Esophagus muscularis mucosa (tissue), 4 donors: ENCODE measurements at regions of chrX and their contacts with region 1.

Region 1: DNA sequence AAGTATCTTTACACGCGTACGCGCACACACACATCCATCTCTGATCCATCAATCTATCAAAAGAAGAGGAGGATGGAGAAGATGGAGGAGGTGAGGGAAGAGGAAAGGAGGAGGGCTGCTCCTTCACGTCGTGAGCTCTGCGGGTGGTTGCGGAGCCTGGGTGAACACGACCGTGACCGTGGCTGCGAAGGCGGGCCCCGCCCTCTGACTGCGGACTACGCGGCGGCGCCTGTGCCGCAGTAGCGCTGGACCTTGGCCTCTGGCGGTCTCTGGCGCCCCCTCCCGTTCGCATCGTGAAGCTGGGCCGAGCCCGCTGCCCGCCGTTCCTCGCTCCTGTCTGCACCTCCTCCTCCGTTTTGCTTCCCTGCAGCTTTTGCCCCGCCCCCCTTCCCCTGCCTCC is 37.7 kb upstream of the ARAF start:
- DNase-seq: peak; percentile 92
- H3K4me3 ChIP-seq: peak overlapping the region; percentile 57 to 67 (median 59)
- H3K27ac ChIP-seq: peak overlapping the region in 1 of 4 donors; percentile 48
- H3K4me1 ChIP-seq: peaks cover 0 to 7% (median 6%) of the 10 kb centered on the region in 4 donors
- H3K27me3 ChIP-seq: no peaks in the 10 kb centered on the region
- CTCF ChIP-seq: peak; percentile 68 to 82 (median 69)
- EP300 ChIP-seq: no peak
- POLR2A ChIP-seq: no peak

Region 2: DNA sequence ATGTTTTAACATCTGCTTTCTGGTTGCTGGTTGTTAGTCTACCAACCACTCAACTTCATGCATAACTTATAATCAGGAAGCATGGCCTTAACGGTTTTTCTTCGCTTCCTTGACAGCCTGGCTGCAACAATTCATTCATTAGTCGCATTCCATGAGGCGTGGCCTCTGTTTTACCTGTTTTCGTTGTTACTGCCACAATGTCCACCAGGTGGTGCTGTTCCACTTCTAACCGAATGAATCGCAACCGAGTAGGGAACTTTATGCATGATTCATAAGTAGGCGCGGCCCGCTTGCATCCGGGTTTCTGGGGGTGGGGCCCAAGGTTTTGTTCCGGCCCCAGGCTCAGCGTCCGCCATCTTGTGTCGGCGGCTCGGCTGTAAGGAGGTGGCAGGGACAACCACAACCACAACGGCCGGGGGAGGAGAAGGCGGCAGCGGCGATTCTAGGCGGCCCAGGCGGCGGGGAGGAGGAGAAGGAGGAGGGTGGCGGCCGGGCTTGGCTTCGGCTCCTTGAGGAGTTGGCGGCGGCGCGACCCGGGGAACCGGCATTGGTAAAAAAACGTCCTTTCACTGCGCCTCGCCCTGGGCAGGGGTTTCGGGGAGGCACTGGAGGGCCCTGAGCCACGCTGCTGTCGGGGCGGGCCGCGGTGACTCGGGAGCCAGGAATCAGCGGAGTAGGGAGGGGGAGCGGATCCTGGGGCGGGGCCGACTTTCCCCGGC is 329.7 kb before region 1 on chrX and contains the start of gene UBA1:
- intact Hi-C with region 1: loop called (anchors 2 kb)
- DNase-seq: peak; percentile 97
- H3K4me3 ChIP-seq: peak within 1 kb of the TSS; percentile 72 to 95 (median 80)
- H3K27ac ChIP-seq: peak within 1 kb of the TSS; percentile 92 to 97 (median 96)
- H3K4me1 ChIP-seq: peaks cover 50 to 71% (median 57%) of the 10 kb centered on the region in 4 donors
- H3K27me3 ChIP-seq: no peaks in the 10 kb centered on the region
- CTCF ChIP-seq: peak; percentile 59 to 95 (median 93)
- EP300 ChIP-seq: no peak
- POLR2A ChIP-seq: peak; percentile 45
- total RNA-seq, gene UBA1: 125 to 218 (median 147) TPM

Region 3: GRCh38 chrX:47384502-47384901 is 138.8 kb before region 1 on chrX:
- intact Hi-C with region 1: loop called (anchors 10 kb)
- DNase-seq: no peak
- H3K4me3 ChIP-seq: no peak overlapping the region
- H3K27ac ChIP-seq: no peak overlapping the region
- H3K4me1 ChIP-seq: no peaks in the 10 kb centered on the region
- H3K27me3 ChIP-seq: no peaks in the 10 kb centered on the region
- CTCF ChIP-seq: peak; percentile 64 to 77 (median 65)
- EP300 ChIP-seq: no peak
- POLR2A ChIP-seq: no peak

Region 4: DNA sequence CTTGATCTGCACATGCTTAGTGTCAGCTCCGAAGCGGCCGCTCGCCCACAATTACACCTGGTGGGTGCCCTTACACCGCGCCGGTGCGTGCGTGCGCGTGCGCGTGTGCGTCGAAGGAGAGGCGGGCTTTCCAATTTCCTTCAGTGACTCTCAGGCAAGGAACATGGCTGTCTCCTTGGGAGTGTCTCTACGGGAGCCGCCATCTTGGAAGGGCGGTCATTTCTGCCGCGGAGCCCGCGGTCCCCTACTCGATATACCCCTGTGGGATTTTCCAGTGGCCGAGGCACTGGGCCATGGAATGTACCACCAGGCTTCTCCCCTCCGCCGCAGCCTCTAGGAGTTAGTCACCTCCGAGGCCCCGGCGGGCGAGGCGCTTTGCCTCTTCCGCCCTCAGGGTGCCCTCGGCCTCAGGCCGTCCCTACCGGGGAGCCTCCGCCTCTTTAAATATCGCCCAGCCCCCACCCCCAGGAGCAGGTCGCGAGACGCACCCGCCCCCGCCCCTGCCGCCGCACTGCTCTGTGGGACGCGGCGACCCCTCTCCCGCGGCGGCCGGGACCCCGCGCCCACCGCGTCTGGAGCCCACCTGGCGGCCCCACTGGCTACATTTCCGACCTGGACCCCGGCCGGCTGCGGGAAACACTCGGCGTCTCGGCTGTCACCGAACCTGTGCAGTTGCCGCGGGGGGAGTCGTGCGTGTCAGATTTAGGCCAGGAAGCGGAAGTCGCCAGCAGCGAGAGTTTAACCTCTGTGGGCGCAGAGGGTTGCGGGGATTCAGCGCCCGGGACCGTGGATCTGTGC is 40.6 kb before region 1 on chrX and contains the start of gene ZNF41:
- intact Hi-C with region 1: loop called (anchors 5 kb)
- DNase-seq: peak; percentile 92
- H3K4me3 ChIP-seq: peak within 1 kb of the TSS; percentile 71 to 88 (median 80)
- H3K27ac ChIP-seq: peak within 1 kb of the TSS; percentile 92 to 98 (median 95)
- H3K4me1 ChIP-seq: peaks cover 0 to 29% (median 15%) of the 10 kb centered on the region in 4 donors
- H3K27me3 ChIP-seq: no peaks in the 10 kb centered on the region
- CTCF ChIP-seq: no peak
- EP300 ChIP-seq: no peak
- POLR2A ChIP-seq: peak; percentile 25
- total RNA-seq, gene ZNF41: 7.5 to 9.0 (median 7.6) TPM

Region 5: GRCh38 chrX:48574270-48575266 is 1051.3 kb after region 1 on chrX and contains the start of gene RBM3:
- intact Hi-C with region 1: no loop called
- DNase-seq: peak; percentile 98
- H3K4me3 ChIP-seq: peak within 1 kb of the TSS; percentile 73 to 79 (median 76)
- H3K27ac ChIP-seq: peak within 1 kb of the TSS; percentile 97 to 99 (median 98)
- H3K4me1 ChIP-seq: peaks cover 16 to 24% (median 18%) of the 10 kb centered on the region in 4 donors
- H3K27me3 ChIP-seq: no peaks in the 10 kb centered on the region
- CTCF ChIP-seq: peak; percentile 22 to 43 (median 40)
- EP300 ChIP-seq: no peak
- POLR2A ChIP-seq: peak; percentile 85
- total RNA-seq, gene RBM3: 94.0 to 204 (median 156) TPM